ENCODE measurements at regions of chr7 and their contacts with region 1.

Region 1: GRCh38 chr7:142535123-142535779 is 214.0 kb upstream of the PRSS1 start:
- DNase-seq: no peak
- H3K4me3 ChIP-seq: no peak overlapping the region; the same call in 1 of the 2 replicates
- CTCF ChIP-seq: peak; percentile 89

Region 2: DNA sequence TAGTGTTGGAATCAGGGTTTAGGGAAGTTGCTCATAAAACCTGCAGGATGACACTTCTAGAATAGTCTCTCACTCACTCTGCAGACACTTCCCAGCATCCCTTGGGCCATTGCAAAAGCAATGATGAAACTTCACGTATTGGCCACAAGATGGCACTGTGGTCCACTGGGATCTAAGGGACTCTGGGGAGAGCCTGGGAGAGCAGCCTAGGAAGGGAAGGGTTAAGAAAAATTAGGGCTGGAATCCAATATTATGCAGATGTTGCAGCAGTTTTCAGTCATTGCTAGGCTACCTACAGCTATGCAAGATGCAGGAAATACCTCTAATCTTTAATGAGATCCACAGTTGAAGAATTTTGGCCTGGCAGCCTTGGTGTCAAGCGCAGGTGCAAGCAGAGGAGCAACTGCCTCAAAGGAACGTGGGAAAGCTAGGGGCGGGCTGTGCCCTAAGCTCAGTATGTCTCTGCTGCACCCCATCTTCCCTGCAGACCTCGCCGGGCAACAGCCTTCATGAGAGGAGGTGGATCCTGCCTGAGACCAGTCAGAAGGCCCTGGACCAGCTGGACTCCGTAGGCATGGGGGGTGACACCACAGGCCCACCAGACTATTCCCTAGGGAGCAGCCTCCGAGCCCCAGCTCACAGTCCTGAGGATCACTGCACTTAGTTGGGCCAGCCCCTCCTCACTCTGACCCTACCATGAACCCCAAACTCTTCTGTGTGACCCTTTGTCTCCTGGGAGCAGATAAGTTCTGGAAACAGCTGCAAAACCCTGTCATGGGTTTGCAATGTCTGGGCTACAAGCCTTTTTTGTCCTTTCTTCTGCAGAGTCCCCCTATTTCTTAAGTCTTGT is 149.5 kb before region 1 on chr7:
- CTCF ChIA-PET with region 1: interaction called, 12 read pairs
- POLR2A ChIA-PET with region 1: no interaction called
- DNase-seq: peak; percentile 16
- H3K4me3 ChIP-seq: no peak overlapping the region
- CTCF ChIP-seq: peak; percentile 85

Region 3: DNA sequence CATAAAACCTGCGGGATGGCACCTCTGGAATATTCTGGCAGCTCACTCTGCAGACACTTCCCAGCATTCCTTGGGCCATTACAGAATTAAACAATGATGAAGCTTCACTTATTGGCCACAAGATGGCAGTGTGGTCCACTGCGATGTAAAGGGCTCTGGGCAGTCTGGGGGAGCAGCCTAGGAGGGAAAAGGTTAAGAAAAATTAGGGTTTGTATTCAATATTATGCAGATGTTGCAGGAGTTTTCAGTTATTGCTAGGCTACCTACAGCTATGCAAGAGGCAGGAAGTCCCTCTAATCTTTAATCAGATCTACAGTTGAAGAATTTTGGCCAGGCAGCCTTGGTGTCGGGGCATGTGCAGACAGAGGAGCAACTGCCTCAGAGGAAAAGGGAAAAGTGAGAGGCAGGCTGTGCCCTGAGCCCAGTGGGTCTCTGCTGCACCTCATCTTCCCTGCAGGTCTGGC is 19.2 kb before region 1 on chr7:
- CTCF ChIA-PET with region 1: interaction called, 122 read pairs
- POLR2A ChIA-PET with region 1: no interaction called
- DNase-seq: peak; percentile 29
- H3K4me3 ChIP-seq: no peak overlapping the region
- CTCF ChIP-seq: peak; percentile 68

Region 4: GRCh38 chr7:142568435-142569097 is 33.3 kb after region 1 on chr7:
- CTCF ChIA-PET with region 1: interaction called, 17 read pairs
- POLR2A ChIA-PET with region 1: no interaction called
- DNase-seq: no peak
- H3K4me3 ChIP-seq: no peak overlapping the region
- CTCF ChIP-seq: no peak

Region 5: DNA sequence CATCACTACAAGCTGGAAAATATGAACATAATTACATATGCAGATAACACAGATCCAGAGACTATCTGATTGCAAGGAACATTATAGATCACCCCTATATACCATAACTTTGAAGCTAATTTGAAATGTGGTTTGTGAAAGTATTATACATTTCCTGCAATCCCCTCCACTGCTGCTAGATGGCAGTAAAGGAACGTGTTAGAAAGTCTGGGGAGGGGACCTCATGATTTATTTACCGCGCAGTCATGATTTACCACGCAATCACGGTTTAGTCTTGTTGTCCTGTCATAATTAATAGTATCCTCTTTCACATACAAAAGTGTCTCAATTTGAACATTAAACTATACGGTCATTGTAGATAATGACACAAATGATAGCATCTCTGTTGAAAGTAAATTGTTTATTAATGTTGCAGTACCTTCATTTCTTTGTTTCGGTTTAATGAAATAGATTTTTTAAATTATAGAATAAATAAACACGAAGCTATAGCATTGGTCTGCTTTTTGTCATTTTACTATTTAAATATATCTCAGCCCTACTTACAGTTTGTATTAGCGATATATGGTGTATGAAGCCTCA is 68.7 kb after region 1 on chr7:
- CTCF ChIA-PET with region 1: interaction called, 51 read pairs
- POLR2A ChIA-PET with region 1: no interaction called
- DNase-seq: no peak
- H3K4me3 ChIP-seq: no peak overlapping the region; the same call in 1 of the 2 replicates
- CTCF ChIP-seq: peak; percentile 70

Region 6: GRCh38 chr7:142771353-142771723 is 236.1 kb after region 1 on chr7:
- CTCF ChIA-PET with region 1: interaction called, 14 read pairs
- POLR2A ChIA-PET with region 1: no interaction called
- DNase-seq: no peak
- H3K4me3 ChIP-seq: no peak overlapping the region
- CTCF ChIP-seq: no peak

Region 7: DNA sequence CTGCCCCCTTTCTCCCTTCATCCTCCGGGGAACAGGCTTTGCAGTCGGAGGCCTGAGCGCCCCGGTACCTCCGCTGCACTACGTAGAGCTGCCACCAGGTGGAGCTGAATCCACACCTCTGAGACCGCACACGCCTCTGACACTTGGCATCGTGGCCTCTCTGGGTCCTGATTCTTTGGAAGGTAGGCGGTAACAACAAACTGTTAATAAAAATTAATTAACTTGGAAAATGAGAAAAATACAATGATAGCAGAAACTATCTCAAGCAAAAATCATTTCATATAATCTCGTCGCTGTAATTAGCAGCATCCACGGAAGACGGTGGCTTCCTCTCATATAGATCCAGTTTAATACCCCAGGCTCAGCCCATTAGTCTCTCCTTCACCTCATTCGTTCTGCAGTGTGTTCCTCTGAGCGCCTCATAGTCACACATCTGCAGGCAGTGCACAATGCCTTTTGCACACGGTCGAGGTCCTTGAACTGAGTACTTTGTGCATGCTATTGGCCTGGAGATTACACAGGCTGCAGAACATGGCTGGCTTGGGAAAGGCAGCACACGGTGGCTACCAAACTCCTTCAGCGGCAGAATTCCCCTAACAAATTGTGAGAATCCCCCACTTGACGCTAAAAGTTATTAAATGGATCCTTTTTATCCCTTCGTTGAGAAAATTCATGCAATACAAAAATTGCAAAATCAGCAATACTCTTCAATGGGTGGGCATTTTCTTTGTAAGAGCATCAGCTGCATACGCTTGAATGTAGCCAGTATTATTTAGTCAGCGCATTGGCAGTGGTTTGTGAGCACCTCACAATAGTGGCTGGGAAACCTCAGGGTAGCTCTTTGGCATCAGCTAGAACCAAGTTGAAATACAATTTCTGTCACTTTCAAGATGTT is 473.0 kb after region 1 on chr7:
- CTCF ChIA-PET with region 1: interaction called, 33 read pairs
- POLR2A ChIA-PET with region 1: no interaction called
- DNase-seq: no peak
- H3K4me3 ChIP-seq: no peak overlapping the region
- CTCF ChIP-seq: peak; percentile 97

Measured in AG04449 (cell line).